CD14-positive monocyte (primary cell): ENCODE measurements at regions of chr1 and their contacts with region 1.

Region 1: GRCh38 chr1:40078512-40079333 is 18.3 kb downstream of the PPT1 start:
- DNase-seq: peak; percentile 42 to 77 (median 69)
- H3K4me3 ChIP-seq: no peak overlapping the region
- H3K4me3 Mint-ChIP-seq: no peak overlapping the region
- H3K27ac ChIP-seq: peak overlapping the region in 1 of 2 donors; percentile 63
- H3K27ac Mint-ChIP-seq: peak overlapping the region in 4 of 7 donors; percentile 28 to 86 (median 63)
- H3K4me1 ChIP-seq: peaks cover 95 to 98% of the 10 kb centered on the region in 2 donors
- H3K4me1 Mint-ChIP-seq: peaks cover 89% of the 10 kb centered on the region
- H3K27me3 ChIP-seq: no peaks in the 10 kb centered on the region
- H3K27me3 Mint-ChIP-seq: peaks cover 0 to 9% (median 2%) of the 10 kb centered on the region in 3 donors
- CTCF ChIP-seq: peak; percentile 96

Region 2: GRCh38 chr1:40059960-40060750 is 18.6 kb before region 1 on chr1:
- intact Hi-C with region 1: loop called in 1 of 2 experiments (anchors 2 kb)
- DNase-seq: peak in 2 of 3 donors; percentile 53 to 58
- H3K4me3 ChIP-seq: peak overlapping the region in 2 of 3 experiments; percentile 34 to 71
- H3K4me3 Mint-ChIP-seq: peak overlapping the region; percentile 49 to 83
- H3K27ac ChIP-seq: peak overlapping the region; percentile 59 to 75
- H3K27ac Mint-ChIP-seq: peak overlapping the region; percentile 83 to 97 (median 95)
- H3K4me1 ChIP-seq: peaks cover 95 to 98% of the 10 kb centered on the region in 2 donors
- H3K4me1 Mint-ChIP-seq: peaks cover 97% of the 10 kb centered on the region
- H3K27me3 ChIP-seq: no peaks in the 10 kb centered on the region
- H3K27me3 Mint-ChIP-seq: no peaks in the 10 kb centered on the region
- CTCF ChIP-seq: no peak

Region 3: GRCh38 chr1:40404670-40405462 is 326.1 kb after region 1 on chr1:
- intact Hi-C with region 1: loop called in 1 of 2 experiments (anchors 10 kb)
- DNase-seq: peak in 2 of 3 donors; percentile 63 to 74
- H3K4me3 ChIP-seq: peak overlapping the region in 1 of 3 experiments; percentile 16
- H3K4me3 Mint-ChIP-seq: no peak overlapping the region
- H3K27ac ChIP-seq: peak overlapping the region in 1 of 2 donors; percentile 71
- H3K27ac Mint-ChIP-seq: peak overlapping the region in 5 of 7 donors; percentile 9 to 94 (median 88)
- H3K4me1 ChIP-seq: peaks cover 39 to 48% of the 10 kb centered on the region in 2 donors
- H3K4me1 Mint-ChIP-seq: peaks cover 48% of the 10 kb centered on the region
- H3K27me3 ChIP-seq: no peaks in the 10 kb centered on the region
- H3K27me3 Mint-ChIP-seq: peaks cover 0 to 3% (median 0%) of the 10 kb centered on the region in 3 donors
- CTCF ChIP-seq: peak; percentile 89